ENCODE measurements at regions of chr20 and their contacts with region 1.

Region 1: GRCh38 chr20:5642155-5642981 is 107.8 kb upstream of the SHLD1 start:
- DNase-seq: no peak
- ATAC-seq: no peak
- H3K4me3 ChIP-seq: no peak overlapping the region
- H3K27ac ChIP-seq: peak overlapping the region; percentile 50 to 91
- H3K4me1 ChIP-seq: peaks cover 37% of the 10 kb centered on the region
- CTCF ChIP-seq: no peak
- EP300 ChIP-seq: peak in 1 of 2 experiments; percentile 31; a peak in 1 of 5 replicates
- POLR2A ChIP-seq: no peak
- RAD21 ChIP-seq: no peak

Region 2: GRCh38 chr20:5135363-5136012 is 506.9 kb before region 1 on chr20:
- CTCF ChIA-PET with region 1: no interaction called
- POLR2A ChIA-PET with region 1: no interaction called
- DNase-seq: no peak
- ATAC-seq: peak in 1 of 2 experiments; percentile 31; a peak in 3 of 6 replicates
- H3K4me3 ChIP-seq: no peak overlapping the region
- H3K27ac ChIP-seq: no peak overlapping the region
- H3K4me1 ChIP-seq: no peaks in the 10 kb centered on the region
- CTCF ChIP-seq: no peak
- EP300 ChIP-seq: no peak
- POLR2A ChIP-seq: no peak
- RAD21 ChIP-seq: no peak

Region 3: DNA sequence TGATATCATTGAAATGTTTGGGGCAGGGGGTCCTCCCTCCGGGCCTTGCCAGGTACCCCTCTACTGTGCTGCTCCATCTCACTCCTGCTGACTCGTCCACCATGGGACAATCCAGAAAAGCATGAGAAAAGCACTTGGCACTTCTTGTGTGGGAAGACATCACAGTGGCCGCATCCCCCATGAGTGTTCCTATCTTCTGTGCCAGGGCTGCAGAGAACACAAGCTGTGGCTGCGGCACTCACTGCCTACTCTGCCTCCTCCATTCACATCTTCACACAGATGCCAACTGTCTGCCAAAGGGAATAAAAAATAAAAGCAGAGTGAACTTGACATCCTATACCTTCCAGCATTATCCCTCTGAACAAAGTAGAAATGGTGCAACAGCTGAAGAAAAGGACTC is 208.3 kb before region 1 on chr20:
- CTCF ChIA-PET with region 1: no interaction called
- POLR2A ChIA-PET with region 1: no interaction called
- DNase-seq: no peak
- ATAC-seq: 0 out of 6 replicates have a peak, but pooled peaks of 1 of the 2 experiments have one; percentile 32
- H3K4me3 ChIP-seq: no peak overlapping the region
- H3K27ac ChIP-seq: no peak overlapping the region
- H3K4me1 ChIP-seq: no peaks in the 10 kb centered on the region
- CTCF ChIP-seq: no peak
- EP300 ChIP-seq: no peak
- POLR2A ChIP-seq: no peak
- RAD21 ChIP-seq: no peak

Region 4: GRCh38 chr20:5621305-5621704 is 21.1 kb before region 1 on chr20:
- CTCF ChIA-PET with region 1: interaction called, 12 read pairs
- POLR2A ChIA-PET with region 1: no interaction called
- DNase-seq: no peak
- ATAC-seq: no peak
- H3K4me3 ChIP-seq: no peak overlapping the region
- H3K27ac ChIP-seq: peak overlapping the region in 1 of 2 experiments; percentile 50; a peak in 3 of 6 replicates
- H3K4me1 ChIP-seq: 0 out of 3 replicates have a peak, but pooled peaks cover 3% of the 10 kb centered on the region
- CTCF ChIP-seq: no peak
- EP300 ChIP-seq: no peak
- POLR2A ChIP-seq: no peak
- RAD21 ChIP-seq: no peak

Measured in A549 (cell line).